K562 (cell line): ENCODE measurements at regions of chr15 and their contacts with region 1.

Region 1: DNA sequence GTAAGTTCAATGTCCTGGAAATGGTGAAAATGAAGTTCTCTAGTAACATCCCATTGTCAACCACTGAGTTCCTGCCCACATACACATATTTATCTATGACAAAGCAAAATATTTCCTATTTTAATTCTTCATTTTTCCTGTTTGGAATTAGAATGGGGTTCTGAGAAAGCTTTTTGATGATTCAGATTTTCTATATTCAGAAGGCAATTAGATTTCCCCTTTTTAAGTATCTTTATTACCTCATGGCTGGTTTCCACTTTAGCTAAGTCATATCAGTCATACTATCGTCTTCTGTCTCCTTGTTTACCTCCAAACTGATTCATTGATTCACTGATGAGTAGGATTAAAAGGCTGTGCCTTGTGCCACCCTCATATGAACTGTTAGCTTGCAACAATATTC is 17.9 kb downstream of the ETFA start:
- DNase-seq: no peak
- ATAC-seq: no peak
- H3K4me3 ChIP-seq: no peak overlapping the region
- H3K27ac ChIP-seq: no peak overlapping the region
- H3K4me1 ChIP-seq: peaks cover 0 to 9% of the 10 kb centered on the region in 2 experiments; a peak in 2 of 5 replicates
- H3K27me3 ChIP-seq: no peaks in the 10 kb centered on the region
- CTCF ChIP-seq: no peak
- EP300 ChIP-seq: no peak
- POLR2A ChIP-seq: no peak
- RAD21 ChIP-seq: no peak

Region 2: GRCh38 chr15:76330080-76330680 is 36.8 kb after region 1 on chr15:
- CTCF ChIA-PET with region 1: no interaction called
- POLR2A ChIA-PET with region 1: interaction called, 5 read pairs
- in situ Hi-C with region 1: no loop called
- intact Hi-C with region 1: loop called (anchors 5 kb)
- DNase-seq: peak in 3 of 4 experiments; percentile 28 to 58 (median 51)
- ATAC-seq: peak; percentile 76
- H3K4me3 ChIP-seq: no peak overlapping the region
- H3K27ac ChIP-seq: no peak overlapping the region
- H3K4me1 ChIP-seq: peaks cover 15 to 16% of the 10 kb centered on the region in 2 experiments; a peak in 4 of 5 replicates
- H3K27me3 ChIP-seq: no peaks in the 10 kb centered on the region
- CTCF ChIP-seq: peak; percentile 60 to 68 (median 67)
- EP300 ChIP-seq: no peak
- POLR2A ChIP-seq: no peak
- RAD21 ChIP-seq: peak; percentile 20 to 58; a peak in 2 of 4 replicates